CD8-positive, alpha-beta T cell (primary cell): ENCODE measurements at regions of chr10 and their contacts with region 1.

Region 1: DNA sequence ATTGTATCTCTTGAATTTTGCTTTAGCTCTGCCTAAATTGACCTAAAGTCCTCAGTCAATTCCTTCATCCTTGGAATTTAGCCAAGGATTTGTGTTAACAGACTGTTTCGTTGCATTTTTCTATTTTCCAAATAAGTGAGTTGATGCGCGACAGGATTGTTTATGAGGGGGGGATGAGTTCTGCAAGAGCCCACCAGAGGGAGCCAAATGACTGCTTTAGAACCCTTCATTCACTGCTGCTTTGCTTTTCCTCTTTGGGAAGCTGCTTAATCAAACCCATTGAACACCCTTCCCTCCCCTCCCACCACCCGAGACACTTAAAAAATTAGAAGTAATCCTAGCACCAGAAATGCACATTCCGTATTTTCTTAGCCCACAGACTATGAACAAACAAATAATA is 33.7 kb upstream of the PTF1A start:
- DNase-seq: peak in 7 of 9 experiments; percentile 1 to 56 (median 27)
- ATAC-seq: no peak
- H3K4me3 ChIP-seq: no peak overlapping the region
- H3K4me3 Mint-ChIP-seq: no peak overlapping the region
- H3K27ac ChIP-seq: no peak overlapping the region
- H3K27ac Mint-ChIP-seq: no peak overlapping the region
- H3K4me1 ChIP-seq: peaks cover 4% of the 10 kb centered on the region
- H3K4me1 Mint-ChIP-seq: peaks cover 6% of the 10 kb centered on the region
- H3K27me3 ChIP-seq: peaks cover 4 to 6% of the 10 kb centered on the region in 2 experiments
- H3K27me3 Mint-ChIP-seq: peaks cover 47% of the 10 kb centered on the region
- CTCF ChIP-seq: peak; percentile 83

Region 2: DNA sequence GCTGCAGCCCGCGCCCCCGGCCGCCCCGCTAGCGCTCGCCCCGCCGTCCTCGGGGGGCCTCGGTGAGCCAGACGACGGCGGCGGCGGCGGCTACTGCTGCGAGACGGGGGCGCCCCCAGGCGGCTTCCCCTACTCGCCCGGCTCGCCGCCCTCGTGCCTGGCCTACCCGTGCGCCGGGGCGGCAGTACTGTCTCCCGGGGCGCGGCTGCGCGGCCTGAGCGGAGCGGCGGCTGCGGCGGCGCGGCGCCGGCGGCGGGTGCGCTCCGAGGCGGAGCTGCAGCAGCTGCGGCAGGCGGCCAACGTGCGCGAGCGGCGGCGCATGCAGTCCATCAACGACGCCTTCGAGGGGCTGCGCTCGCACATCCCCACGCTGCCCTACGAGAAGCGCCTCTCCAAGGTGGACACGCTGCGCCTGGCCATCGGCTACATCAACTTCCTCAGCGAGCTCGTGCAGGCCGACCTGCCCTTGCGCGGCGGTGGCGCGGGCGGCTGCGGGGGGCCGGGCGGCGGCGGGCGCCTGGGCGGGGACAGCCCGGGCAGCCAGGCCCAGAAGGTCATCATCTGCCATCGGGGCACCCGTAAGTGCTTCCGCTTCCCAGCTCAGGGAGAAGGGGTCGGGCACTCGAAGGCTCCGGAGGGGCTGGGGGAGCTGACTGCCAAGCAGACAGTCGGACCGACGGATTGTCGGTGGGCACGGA is 34.5 kb after region 1 on chr10:
- CTCF ChIA-PET with region 1: no interaction called
- POLR2A ChIA-PET with region 1: no interaction called
- intact Hi-C with region 1: no loop called
- DNase-seq: no peak
- ATAC-seq: no peak
- H3K4me3 ChIP-seq: no peak overlapping the region
- H3K4me3 Mint-ChIP-seq: no peak overlapping the region
- H3K27ac ChIP-seq: no peak overlapping the region
- H3K27ac Mint-ChIP-seq: no peak overlapping the region
- H3K4me1 ChIP-seq: no peaks in the 10 kb centered on the region
- H3K4me1 Mint-ChIP-seq: peaks cover 5% of the 10 kb centered on the region
- H3K27me3 ChIP-seq: peaks cover 0 to 7% of the 10 kb centered on the region in 2 experiments
- H3K27me3 Mint-ChIP-seq: peaks cover 63% of the 10 kb centered on the region
- CTCF ChIP-seq: no peak

Region 3: GRCh38 chr10:23293145-23293724 is 134.9 kb after region 1 on chr10:
- CTCF ChIA-PET with region 1: interaction called, 8 read pairs
- POLR2A ChIA-PET with region 1: no interaction called
- intact Hi-C with region 1: loop called in 1 of 2 experiments (anchors 2 kb)
- DNase-seq: peak in 2 of 9 experiments; percentile 19 to 30
- ATAC-seq: no peak
- H3K4me3 ChIP-seq: no peak overlapping the region
- H3K4me3 Mint-ChIP-seq: no peak overlapping the region
- H3K27ac ChIP-seq: no peak overlapping the region
- H3K27ac Mint-ChIP-seq: no peak overlapping the region
- H3K4me1 ChIP-seq: no peaks in the 10 kb centered on the region
- H3K4me1 Mint-ChIP-seq: no peaks in the 10 kb centered on the region
- H3K27me3 ChIP-seq: no peaks in the 10 kb centered on the region
- H3K27me3 Mint-ChIP-seq: peaks cover 22% of the 10 kb centered on the region
- CTCF ChIP-seq: peak; percentile 39

Region 4: GRCh38 chr10:23525406-23525805 is 367.0 kb after region 1 on chr10:
- CTCF ChIA-PET with region 1: no interaction called
- POLR2A ChIA-PET with region 1: no interaction called
- intact Hi-C with region 1: loop called in 1 of 2 experiments (anchors 5 kb)
- DNase-seq: peak in 2 of 9 experiments; percentile 27 to 39
- ATAC-seq: no peak
- H3K4me3 ChIP-seq: no peak overlapping the region
- H3K4me3 Mint-ChIP-seq: no peak overlapping the region
- H3K27ac ChIP-seq: no peak overlapping the region
- H3K27ac Mint-ChIP-seq: no peak overlapping the region
- H3K4me1 ChIP-seq: no peaks in the 10 kb centered on the region
- H3K4me1 Mint-ChIP-seq: no peaks in the 10 kb centered on the region
- H3K27me3 ChIP-seq: no peaks in the 10 kb centered on the region
- H3K27me3 Mint-ChIP-seq: no peaks in the 10 kb centered on the region
- CTCF ChIP-seq: peak; percentile 15

Region 5: GRCh38 chr10:24201503-24202180 is 1043.3 kb after region 1 on chr10:
- CTCF ChIA-PET with region 1: interaction called, 3 read pairs
- POLR2A ChIA-PET with region 1: no interaction called
- intact Hi-C with region 1: loop called in 1 of 2 experiments (anchors 1 kb)
- DNase-seq: no peak
- ATAC-seq: no peak
- H3K4me3 ChIP-seq: no peak overlapping the region
- H3K4me3 Mint-ChIP-seq: no peak overlapping the region
- H3K27ac ChIP-seq: no peak overlapping the region
- H3K27ac Mint-ChIP-seq: no peak overlapping the region
- H3K4me1 ChIP-seq: no peaks in the 10 kb centered on the region
- H3K4me1 Mint-ChIP-seq: no peaks in the 10 kb centered on the region
- H3K27me3 ChIP-seq: no peaks in the 10 kb centered on the region
- H3K27me3 Mint-ChIP-seq: peaks cover 6% of the 10 kb centered on the region
- CTCF ChIP-seq: no peak

Region 6: DNA sequence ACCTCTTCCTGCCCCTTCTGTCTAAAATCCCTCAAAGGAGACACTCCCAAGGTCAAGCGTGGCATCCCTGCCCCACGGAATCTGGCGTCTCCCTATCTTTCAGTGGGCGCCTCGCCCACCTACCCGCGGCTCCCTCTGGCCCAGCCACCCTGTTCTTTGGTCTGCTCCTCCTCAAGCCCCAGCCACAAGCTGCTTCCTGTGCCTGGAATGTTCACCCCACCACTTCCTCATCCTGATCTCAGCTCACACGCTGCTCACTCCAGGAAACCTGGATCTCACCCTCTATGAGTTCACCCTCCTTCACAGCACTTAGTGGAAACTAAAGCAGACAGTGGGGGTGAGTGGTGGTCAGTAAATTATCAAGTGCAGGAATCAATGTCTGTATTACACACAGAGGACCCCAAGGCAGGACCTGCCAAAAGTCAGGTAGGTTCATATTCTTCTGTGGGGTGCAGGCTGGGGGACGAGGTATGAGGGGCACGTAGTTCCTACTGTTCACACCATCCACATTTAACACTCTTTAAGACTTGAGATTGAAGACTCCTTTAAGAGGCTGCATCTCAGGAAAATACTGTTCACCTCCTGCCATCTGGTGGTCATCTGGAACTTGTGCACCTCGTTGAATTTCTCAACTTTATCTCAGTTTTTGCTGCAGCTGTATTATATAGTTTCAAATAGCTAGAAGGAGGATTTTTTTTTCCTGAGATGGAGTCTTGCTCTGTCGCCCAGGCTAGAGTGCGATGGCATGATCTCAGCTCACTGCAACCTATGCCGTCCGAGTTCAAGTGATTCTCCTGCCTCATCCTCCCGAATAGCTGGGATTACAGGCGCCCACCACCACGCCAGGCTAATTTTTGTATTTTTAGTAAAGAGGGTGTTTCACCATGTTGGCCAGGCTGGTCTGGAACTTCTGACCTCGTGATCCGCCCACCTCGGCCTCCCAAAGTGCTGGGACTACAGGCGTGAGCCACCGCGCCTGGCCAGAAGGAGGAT is 1398.7 kb after region 1 on chr10:
- CTCF ChIA-PET with region 1: interaction called, 4 read pairs
- POLR2A ChIA-PET with region 1: no interaction called
- intact Hi-C with region 1: loop called in 1 of 2 experiments (anchors 2 kb)
- DNase-seq: peak in 3 of 9 experiments; percentile 8 to 53 (median 53)
- ATAC-seq: no peak
- H3K4me3 ChIP-seq: no peak overlapping the region
- H3K4me3 Mint-ChIP-seq: no peak overlapping the region
- H3K27ac ChIP-seq: no peak overlapping the region
- H3K27ac Mint-ChIP-seq: no peak overlapping the region
- H3K4me1 ChIP-seq: peaks cover 3% of the 10 kb centered on the region
- H3K4me1 Mint-ChIP-seq: peaks cover 7% of the 10 kb centered on the region
- H3K27me3 ChIP-seq: no peaks in the 10 kb centered on the region
- H3K27me3 Mint-ChIP-seq: peaks cover 2% of the 10 kb centered on the region
- CTCF ChIP-seq: peak; percentile 64